ENCODE measurements at regions of chr1 and their contacts with region 1.

Region 1: DNA sequence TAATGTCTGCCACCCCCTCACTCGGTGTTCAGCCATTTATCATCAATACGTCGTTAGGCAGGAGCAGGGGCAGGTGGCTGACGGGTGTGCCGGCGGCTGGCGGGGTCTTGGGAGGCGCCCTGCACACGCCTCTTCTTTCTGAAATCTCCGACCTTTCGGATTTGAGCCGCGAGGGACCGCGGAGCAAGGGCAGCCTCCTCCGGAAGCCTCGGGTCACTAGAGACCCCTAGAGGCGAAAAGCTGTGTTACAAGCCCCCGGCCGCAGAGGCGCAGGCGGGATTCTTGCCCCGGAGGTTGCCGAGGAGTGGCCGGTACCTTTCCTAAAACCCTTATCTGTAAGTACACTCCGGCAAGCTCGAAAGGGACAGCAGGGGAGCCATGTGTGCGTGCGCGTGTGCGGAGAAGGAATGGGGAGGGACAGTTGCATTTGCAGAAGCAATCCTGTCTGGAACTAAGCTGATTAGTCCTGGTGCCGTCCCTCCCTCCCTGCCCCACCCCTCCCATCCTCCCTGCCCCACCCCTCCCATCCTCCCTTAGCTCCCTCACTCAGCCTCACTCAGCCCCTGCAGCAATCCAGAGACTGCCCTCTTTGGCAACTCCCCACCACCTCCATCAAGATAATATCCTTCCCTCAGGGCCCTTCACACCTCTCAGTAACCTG is 11.0 kb downstream of the BRINP2 start:
- ATAC-seq: peak; percentile 71 to 97 (median 94)
- H3K4me3 ChIP-seq: peak overlapping the region; percentile 14 to 31 (median 25)
- H3K27ac ChIP-seq: no peak overlapping the region
- H3K4me1 ChIP-seq: peaks cover 3 to 6% of the 10 kb centered on the region in 2 donors

Region 2: DNA sequence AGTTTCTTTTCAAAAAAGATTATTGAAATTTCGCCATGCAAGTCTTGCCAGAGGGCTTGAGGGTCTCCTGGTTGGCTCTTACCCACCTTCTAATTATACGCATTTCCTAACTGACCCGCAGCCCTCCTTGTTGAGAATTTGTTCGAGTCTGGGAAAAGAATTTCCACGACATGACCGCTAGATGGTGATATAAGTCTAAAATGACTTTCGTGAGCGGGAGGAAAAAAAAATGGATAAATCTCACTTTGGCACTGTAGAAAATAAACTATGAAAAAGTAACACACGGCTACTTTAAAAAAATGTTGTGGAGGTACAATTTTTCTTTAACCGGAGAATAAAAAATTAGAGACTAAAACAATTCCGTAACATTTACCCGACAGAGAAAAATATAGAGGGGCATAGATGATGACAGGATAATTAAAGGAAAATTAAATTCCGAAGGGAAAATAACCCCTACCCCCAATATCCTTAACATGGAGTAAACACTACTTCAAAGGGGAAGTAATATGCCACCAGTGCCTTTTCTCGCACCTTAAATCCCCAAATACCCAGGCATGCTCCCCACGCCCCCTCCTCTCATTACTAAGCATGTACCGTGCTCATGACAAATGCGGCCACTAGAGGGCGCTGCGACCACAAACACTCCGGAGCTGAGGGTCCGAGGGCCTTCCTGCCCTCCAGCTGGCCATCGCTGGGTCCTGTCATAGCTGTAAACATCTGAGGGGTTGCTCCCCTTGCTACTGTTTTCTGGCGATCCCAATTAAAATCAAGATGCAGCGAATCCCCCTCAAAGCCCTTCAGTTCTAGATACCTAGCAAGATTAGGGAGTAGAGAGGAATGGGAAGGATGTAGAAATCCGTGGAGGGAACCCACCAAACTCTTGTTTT is 284.2 kb before region 1 on chr1:
- in situ Hi-C with region 1: loop called in 4 of 9 experiments (anchors 10 to 25 kb)
- ATAC-seq: peak; percentile 72 to 100 (median 100)
- H3K4me3 ChIP-seq: peak overlapping the region in 3 of 5 donors; percentile 5 to 14 (median 14)
- H3K27ac ChIP-seq: no peak overlapping the region
- H3K4me1 ChIP-seq: peaks cover 3 to 6% of the 10 kb centered on the region in 2 donors

Region 3: DNA sequence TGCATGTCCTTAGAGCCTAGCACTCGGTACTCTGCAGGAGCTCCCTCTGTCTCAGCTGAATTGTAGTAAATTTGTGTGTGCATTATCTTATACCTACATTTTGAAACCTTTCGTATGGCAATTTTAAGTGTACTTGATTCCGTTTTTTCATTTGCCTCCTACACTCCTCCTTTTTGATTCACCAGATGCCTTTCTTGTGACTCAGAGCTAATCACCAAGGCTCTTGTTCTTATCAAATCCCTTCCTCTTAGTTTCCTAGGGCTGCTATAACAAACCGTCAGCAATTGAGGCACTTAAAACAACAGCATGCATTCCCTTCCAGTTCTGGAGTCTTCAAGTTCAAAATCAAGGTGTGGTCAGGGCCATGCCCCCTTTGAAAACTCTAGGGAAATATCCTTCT is 278.3 kb before region 1 on chr1:
- in situ Hi-C with region 1: loop called in 4 of 9 experiments (anchors 10 to 25 kb)
- ATAC-seq: no peak
- H3K4me3 ChIP-seq: no peak overlapping the region
- H3K27ac ChIP-seq: no peak overlapping the region
- H3K4me1 ChIP-seq: peaks cover 0 to 8% of the 10 kb centered on the region in 2 donors

Region 4: GRCh38 chr1:177423090-177423489 is 241.3 kb after region 1 on chr1:
- in situ Hi-C with region 1: no loop called
- ATAC-seq: no peak
- H3K4me3 ChIP-seq: no peak overlapping the region
- H3K27ac ChIP-seq: no peak overlapping the region
- H3K4me1 ChIP-seq: no peaks in the 10 kb centered on the region

Region 5: DNA sequence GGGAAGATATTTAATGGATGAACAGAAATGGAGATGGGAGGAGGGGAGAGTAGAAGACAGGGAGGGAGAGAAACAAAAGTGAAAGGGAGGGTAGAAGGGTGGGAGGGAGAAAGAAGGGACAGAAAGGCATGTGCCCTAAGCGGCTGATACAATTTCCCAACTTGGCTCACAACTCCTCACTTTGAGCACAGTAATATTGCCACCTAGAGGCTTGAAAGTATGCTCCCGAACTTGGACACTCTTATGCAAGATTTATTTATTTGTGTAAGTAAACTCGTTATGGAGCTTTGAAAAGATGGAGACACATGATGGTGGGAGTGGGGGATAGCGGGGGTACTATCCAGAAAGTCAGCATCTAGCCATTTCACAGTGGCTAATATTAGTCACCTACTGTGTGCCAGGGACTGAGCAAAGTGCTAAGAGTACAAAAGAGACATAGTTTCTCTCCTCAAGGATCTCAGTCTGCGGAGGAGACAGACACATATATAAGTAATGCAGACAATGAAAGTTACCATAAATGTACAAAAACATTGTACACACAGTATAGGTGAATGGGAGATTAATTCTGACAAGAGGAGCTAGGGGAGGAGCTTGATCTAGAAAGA is 598.4 kb after region 1 on chr1:
- in situ Hi-C with region 1: loop called in 1 of 9 experiments (anchors 25 kb)
- ATAC-seq: peak in 7 of 8 experiments; percentile 43 to 83 (median 69)
- H3K4me3 ChIP-seq: no peak overlapping the region
- H3K27ac ChIP-seq: no peak overlapping the region
- H3K4me1 ChIP-seq: peaks cover 36 to 47% of the 10 kb centered on the region in 2 donors